Colonic mucosa (tissue), 4 donors: ENCODE measurements at regions of chr2 and their contacts with region 1.

Region 1: DNA sequence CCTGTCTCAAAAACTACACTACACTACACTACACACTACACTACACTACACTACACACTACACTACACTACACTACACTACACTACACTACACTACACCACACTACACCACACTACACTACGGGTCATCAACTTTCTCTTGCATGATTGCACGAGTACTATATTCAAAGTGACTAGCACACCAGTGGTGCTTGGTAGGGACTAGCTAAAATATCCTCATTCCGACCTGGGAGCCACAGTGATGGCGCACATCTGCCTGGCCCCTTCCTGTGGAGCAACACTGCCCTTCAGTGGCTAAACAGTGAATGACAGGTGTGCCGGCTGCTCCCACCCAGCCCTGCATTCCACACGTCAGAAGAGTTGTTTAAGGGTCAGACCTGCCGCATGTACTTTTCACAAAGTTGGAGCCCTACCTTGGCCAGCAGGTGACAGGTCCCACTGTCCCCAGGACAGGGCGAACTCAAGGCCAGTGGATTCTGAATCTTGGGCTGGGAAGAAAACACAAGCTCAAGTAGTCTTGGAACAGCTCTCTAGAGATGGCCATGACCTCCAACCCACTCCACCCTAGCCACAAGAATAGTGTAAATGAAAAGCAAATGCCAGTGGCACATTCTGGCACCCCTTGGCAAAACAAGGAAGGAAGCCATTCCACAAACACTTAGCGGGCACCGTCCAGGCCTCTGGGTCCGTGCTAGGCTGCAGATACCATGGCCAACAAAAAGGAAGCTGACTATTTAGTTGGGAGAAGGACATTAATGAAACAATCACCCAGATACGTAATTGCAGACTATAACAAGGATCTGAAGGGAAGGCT is 79.7 kb upstream of the MSH2 start:
- DNase-seq: peak; percentile 81
- H3K4me3 ChIP-seq: no peak overlapping the region
- H3K27ac ChIP-seq: no peak overlapping the region
- H3K4me1 ChIP-seq: no peaks in the 10 kb centered on the region
- H3K27me3 ChIP-seq: no peaks in the 10 kb centered on the region
- CTCF ChIP-seq: peak; percentile 99

Region 2: GRCh38 chr2:46632349-46632748 is 690.9 kb before region 1 on chr2:
- intact Hi-C with region 1: loop called (anchors 10 kb)
- DNase-seq: no peak
- H3K4me3 ChIP-seq: no peak overlapping the region
- H3K27ac ChIP-seq: no peak overlapping the region
- H3K4me1 ChIP-seq: no peaks in the 10 kb centered on the region
- H3K27me3 ChIP-seq: no peaks in the 10 kb centered on the region
- CTCF ChIP-seq: no peak

Region 3: DNA sequence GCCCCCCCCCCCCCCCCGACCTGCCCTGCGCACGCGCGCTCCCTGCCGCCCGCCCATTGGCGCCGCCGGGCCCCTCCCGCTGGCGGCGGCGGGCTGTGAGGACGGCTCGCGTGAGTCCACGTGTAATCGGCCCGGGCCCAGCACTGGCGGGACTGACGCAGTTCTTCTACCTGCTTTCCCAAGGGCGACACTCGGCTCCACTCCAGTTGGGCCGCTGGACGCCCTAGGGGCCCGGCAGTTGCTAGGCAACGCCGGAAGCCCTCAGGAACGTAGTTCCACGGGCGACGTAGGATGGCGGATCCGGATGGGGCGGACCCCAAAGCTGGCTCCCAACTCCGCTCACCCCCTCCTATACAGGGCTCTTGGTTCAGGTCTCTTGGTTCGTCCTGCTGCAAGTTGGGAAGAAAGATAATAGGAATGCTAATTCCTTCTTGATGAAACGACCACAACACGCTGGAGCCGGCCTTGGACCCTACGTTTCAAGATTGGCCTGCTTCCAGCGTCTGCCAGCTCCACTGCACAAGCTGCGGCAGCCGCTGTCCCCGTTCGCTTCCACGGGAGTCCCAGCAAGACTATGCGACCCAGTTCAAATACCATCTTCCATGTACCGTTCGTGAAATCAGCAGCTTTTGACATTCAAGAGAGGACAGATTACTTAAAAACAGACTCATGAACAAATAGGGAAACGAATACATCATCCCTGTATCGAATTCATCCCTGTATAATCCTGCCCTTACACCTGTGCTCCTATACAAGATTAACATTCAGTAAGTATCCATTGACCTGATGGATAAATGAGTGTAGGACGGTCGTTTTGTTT is 407.2 kb before region 1 on chr2:
- intact Hi-C with region 1: loop called (anchors 5 kb)
- DNase-seq: peak; percentile 89
- H3K4me3 ChIP-seq: peak overlapping the region; percentile 100
- H3K27ac ChIP-seq: peak overlapping the region; percentile 89
- H3K4me1 ChIP-seq: peaks cover 12% of the 10 kb centered on the region
- H3K27me3 ChIP-seq: no peaks in the 10 kb centered on the region
- CTCF ChIP-seq: no peak

Region 4: GRCh38 chr2:46984642-46985476 is 338.4 kb before region 1 on chr2:
- intact Hi-C with region 1: loop called (anchors 2 kb)
- DNase-seq: peak; percentile 57
- H3K4me3 ChIP-seq: no peak overlapping the region
- H3K27ac ChIP-seq: peak overlapping the region; percentile 79
- H3K4me1 ChIP-seq: peaks cover 19% of the 10 kb centered on the region
- H3K27me3 ChIP-seq: no peaks in the 10 kb centered on the region
- CTCF ChIP-seq: no peak